Activated CD8-positive, alpha-beta memory T cell treated with anti-CD3 and anti-CD28 coated beads, Interleukin-2, amount 10 ng/mL, durations not matched to agents 7 days and 5 days (primary cell): ENCODE measurements at regions of chr11 and their contacts with region 1.

Region 1: DNA sequence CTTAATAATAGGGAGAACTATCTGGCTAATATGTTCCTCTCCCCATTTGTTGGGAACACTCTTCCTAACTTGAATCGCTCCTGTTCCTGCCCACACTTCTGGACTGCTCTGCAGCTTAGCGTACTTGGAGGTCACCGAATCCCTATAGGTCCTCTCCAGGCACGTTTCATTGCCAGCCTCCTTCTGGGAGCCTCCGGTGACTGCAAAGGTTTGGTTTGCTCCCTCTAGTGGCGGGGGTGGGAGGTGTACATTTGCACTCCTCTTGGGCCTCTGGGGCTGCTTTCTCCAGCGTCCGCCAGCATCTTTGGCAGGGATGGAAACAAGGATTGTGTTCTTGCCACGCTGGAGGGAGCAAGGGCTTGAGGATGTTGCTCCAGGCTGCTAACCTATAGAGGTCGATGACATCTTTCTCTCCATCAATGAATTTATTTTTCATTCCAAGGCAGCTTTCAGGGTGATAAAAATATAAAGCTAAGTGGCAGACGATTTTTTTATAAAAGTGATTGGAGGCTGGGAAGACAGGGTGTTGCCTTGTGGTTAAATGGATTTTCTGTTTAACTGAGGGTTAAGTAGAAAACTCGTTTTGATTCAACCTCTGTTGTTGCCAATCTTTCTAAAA is 48.7 kb downstream of the TSPAN18 start:
- DNase-seq: peak; percentile 70
- ATAC-seq: peak; percentile 65
- H3K4me3 Mint-ChIP-seq: no peak overlapping the region
- H3K27ac Mint-ChIP-seq: no peak overlapping the region
- H3K4me1 Mint-ChIP-seq: no peaks in the 10 kb centered on the region
- H3K27me3 Mint-ChIP-seq: peaks cover 11% of the 10 kb centered on the region

Region 2: GRCh38 chr11:44634401-44635281 is 140.8 kb before region 1 on chr11:
- CTCF ChIA-PET with region 1: interaction called, 10 read pairs
- DNase-seq: peak; percentile 40
- ATAC-seq: no peak
- H3K4me3 Mint-ChIP-seq: no peak overlapping the region
- H3K27ac Mint-ChIP-seq: no peak overlapping the region
- H3K4me1 Mint-ChIP-seq: no peaks in the 10 kb centered on the region
- H3K27me3 Mint-ChIP-seq: peaks cover 28% of the 10 kb centered on the region

Region 3: GRCh38 chr11:44658506-44658850 is 117.0 kb before region 1 on chr11:
- CTCF ChIA-PET with region 1: interaction called, 14 read pairs
- DNase-seq: no peak
- ATAC-seq: no peak
- H3K4me3 Mint-ChIP-seq: no peak overlapping the region
- H3K27ac Mint-ChIP-seq: no peak overlapping the region
- H3K4me1 Mint-ChIP-seq: peaks cover 13% of the 10 kb centered on the region
- H3K27me3 Mint-ChIP-seq: peaks cover 15% of the 10 kb centered on the region